Body of pancreas (tissue), 4 donors: ENCODE measurements at regions of chr19 and their contacts with region 1.

Region 1: GRCh38 chr19:2289714-2290435 is 7.9 kb upstream of the PEAK3 start:
- DNase-seq: peak in 1 of 4 donors; percentile 62
- ATAC-seq: no peak
- H3K4me3 ChIP-seq: no peak overlapping the region
- H3K27ac ChIP-seq: peak overlapping the region in 2 of 4 donors; percentile 50 to 72
- H3K4me1 ChIP-seq: peaks cover 26% of the 10 kb centered on the region
- H3K27me3 ChIP-seq: peaks cover 5 to 39% of the 10 kb centered on the region in 2 donors
- CTCF ChIP-seq: no peak
- POLR2A ChIP-seq: no peak

Region 2: GRCh38 chr19:2385053-2385721 is 95.3 kb after region 1 on chr19:
- intact Hi-C with region 1: loop called (anchors 5 kb)
- DNase-seq: peak; percentile 18 to 59 (median 42)
- ATAC-seq: peak; percentile 52
- H3K4me3 ChIP-seq: no peak overlapping the region
- H3K27ac ChIP-seq: no peak overlapping the region
- H3K4me1 ChIP-seq: no peaks in the 10 kb centered on the region
- H3K27me3 ChIP-seq: no peaks in the 10 kb centered on the region
- CTCF ChIP-seq: no peak
- POLR2A ChIP-seq: no peak

Region 3: GRCh38 chr19:2561895-2562294 is 272.0 kb after region 1 on chr19:
- intact Hi-C with region 1: no loop called
- DNase-seq: no peak
- ATAC-seq: no peak
- H3K4me3 ChIP-seq: no peak overlapping the region
- H3K27ac ChIP-seq: no peak overlapping the region
- H3K4me1 ChIP-seq: no peaks in the 10 kb centered on the region
- H3K27me3 ChIP-seq: no peaks in the 10 kb centered on the region
- CTCF ChIP-seq: no peak
- POLR2A ChIP-seq: no peak